Heart left ventricle (tissue), 16 donors: ENCODE measurements at regions of chr14 and their contacts with region 1.

Region 1: GRCh38 chr14:70821584-70822529 is 12.5 kb upstream of the MAP3K9 start:
- DNase-seq: peak; percentile 53 to 80 (median 64)
- ATAC-seq: peak in 3 of 4 donors; percentile 59 to 71 (median 70)
- H3K4me3 ChIP-seq: peak overlapping the region; percentile 52 to 89 (median 73)
- H3K27ac ChIP-seq: peak overlapping the region in 9 of 12 donors; percentile 17 to 77 (median 58)
- H3K4me1 ChIP-seq: peaks cover 0 to 22% (median 12%) of the 10 kb centered on the region in 12 donors
- H3K27me3 ChIP-seq: peaks cover 0 to 24% (median 0%) of the 10 kb centered on the region in 9 donors
- CTCF ChIP-seq: no peak
- POLR2A ChIP-seq: peak in 1 of 2 donors; percentile 26

Region 2: GRCh38 chr14:70622111-70622712 is 199.6 kb before region 1 on chr14:
- intact Hi-C with region 1: loop called (anchors 2 to 10 kb)
- DNase-seq: no peak
- ATAC-seq: peak in 3 of 4 donors; percentile 47 to 77 (median 56)
- H3K4me3 ChIP-seq: no peak overlapping the region
- H3K27ac ChIP-seq: no peak overlapping the region
- H3K4me1 ChIP-seq: peaks cover 0 to 7% (median 0%) of the 10 kb centered on the region in 12 donors
- H3K27me3 ChIP-seq: no peaks in the 10 kb centered on the region
- CTCF ChIP-seq: peak; percentile 45 to 70 (median 62)
- POLR2A ChIP-seq: no peak

Region 3: DNA sequence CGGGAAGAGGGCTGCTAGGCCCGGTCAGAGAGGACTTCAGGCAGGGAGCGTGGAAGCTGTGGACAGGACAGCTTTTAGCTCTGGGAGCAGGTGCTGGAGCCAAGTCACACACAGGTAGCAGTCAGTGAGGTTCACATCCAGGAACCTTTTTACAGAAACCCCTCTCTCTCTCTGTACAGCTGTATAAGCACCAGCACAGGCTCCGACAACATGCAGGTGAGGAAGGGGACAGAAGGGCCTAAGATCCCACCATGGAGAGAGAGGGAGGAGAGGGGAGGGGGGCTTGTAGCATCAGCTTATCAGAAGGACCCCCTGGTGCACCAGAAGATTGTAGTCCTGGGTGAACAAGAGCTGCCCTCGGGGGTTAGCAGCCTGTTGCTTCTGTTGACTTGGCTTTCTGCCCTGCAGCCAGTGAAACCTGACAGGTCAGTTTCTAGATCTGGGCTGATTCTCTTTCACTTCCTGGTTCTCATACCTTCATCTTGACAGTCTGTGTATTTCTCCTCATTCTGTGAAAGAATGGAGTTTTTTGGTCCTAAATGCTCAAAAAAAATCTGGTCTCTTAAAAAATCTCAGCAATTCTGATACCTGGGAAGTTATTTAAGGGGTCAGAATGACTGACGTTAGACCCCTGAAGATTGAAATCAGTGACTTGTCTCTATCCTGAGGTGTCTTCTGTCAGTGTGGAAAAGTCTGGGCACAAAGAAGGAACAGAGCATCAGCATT is 156.5 kb before region 1 on chr14:
- intact Hi-C with region 1: no loop called
- DNase-seq: no peak
- ATAC-seq: no peak
- H3K4me3 ChIP-seq: no peak overlapping the region
- H3K27ac ChIP-seq: no peak overlapping the region
- H3K4me1 ChIP-seq: peaks cover 0 to 24% (median 10%) of the 10 kb centered on the region in 12 donors
- H3K27me3 ChIP-seq: no peaks in the 10 kb centered on the region
- CTCF ChIP-seq: no peak
- POLR2A ChIP-seq: no peak

Region 4: GRCh38 chr14:70901269-70901668 is 79.4 kb after region 1 on chr14:
- intact Hi-C with region 1: loop called in 9 of 10 experiments (anchors 2 to 5 kb)
- DNase-seq: no peak
- ATAC-seq: no peak
- H3K4me3 ChIP-seq: no peak overlapping the region
- H3K27ac ChIP-seq: no peak overlapping the region
- H3K4me1 ChIP-seq: peaks cover 0 to 48% (median 22%) of the 10 kb centered on the region in 12 donors
- H3K27me3 ChIP-seq: no peaks in the 10 kb centered on the region
- CTCF ChIP-seq: no peak
- POLR2A ChIP-seq: no peak

Region 5: GRCh38 chr14:70907176-70907995 is 85.5 kb after region 1 on chr14 and contains the start of gene PCNX1:
- intact Hi-C with region 1: loop called in 9 of 10 experiments (anchors 2 to 5 kb)
- DNase-seq: peak; percentile 90 to 94 (median 91)
- ATAC-seq: peak; percentile 82 to 91 (median 86)
- H3K4me3 ChIP-seq: peak within 1 kb of the TSS; percentile 78 to 99 (median 94)
- H3K27ac ChIP-seq: peak within 1 kb of the TSS; percentile 80 to 98 (median 94)
- H3K4me1 ChIP-seq: peaks cover 0 to 66% (median 50%) of the 10 kb centered on the region in 12 donors
- H3K27me3 ChIP-seq: no peaks in the 10 kb centered on the region
- CTCF ChIP-seq: peak; percentile 73 to 97 (median 89)
- POLR2A ChIP-seq: peak in 1 of 2 donors; percentile 37
- total RNA-seq, gene PCNX1: 36.3 to 64.7 (median 53.4) TPM

Region 6: DNA sequence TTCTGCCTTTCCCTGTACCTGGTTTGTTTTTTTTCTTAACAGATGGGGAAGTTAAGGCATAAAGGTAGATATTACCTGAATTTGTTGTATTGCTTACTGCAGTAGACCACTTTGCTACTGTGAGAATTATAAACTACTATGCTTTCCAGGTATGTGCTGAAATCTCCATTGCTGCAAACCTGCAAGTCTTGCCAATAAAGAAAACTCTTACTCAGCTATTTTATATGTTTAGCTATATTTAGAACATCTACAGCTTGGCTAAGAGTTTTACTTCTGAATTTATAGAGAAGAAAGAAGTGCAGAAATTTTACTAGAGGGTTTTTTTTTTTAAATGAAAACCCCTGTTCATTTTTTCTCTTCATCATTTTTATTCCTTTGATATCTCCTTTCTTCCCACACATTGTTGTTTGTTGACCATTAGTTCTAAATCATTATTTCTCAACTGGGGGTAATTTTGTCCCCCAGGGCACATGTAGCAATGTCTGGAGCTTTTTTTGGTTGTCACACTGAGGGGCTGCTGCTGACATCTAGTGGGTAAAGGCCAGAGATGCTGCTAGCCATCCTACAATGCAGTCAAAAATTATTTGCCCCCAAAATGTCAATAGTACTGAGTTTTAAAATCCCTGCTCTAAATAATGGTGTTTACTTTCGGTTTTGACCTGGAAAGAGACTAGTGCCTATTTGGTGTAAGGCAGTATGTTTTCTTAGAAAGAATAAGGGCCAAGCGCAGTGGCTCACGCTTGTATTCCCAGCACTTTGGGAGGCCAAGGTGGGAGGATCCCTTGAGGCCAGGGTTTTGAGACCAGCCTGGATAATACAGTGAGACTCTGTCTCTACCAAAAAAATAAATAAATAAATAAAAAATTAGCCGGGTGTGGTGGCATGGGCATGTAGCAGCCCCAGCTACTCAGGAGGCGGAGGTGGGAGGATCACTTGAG is 134.0 kb after region 1 on chr14:
- intact Hi-C with region 1: loop called in 4 of 10 experiments (anchors 5 kb)
- DNase-seq: no peak
- ATAC-seq: peak in 3 of 4 donors; percentile 49 to 55 (median 54)
- H3K4me3 ChIP-seq: no peak overlapping the region
- H3K27ac ChIP-seq: no peak overlapping the region
- H3K4me1 ChIP-seq: peaks cover 0 to 47% (median 24%) of the 10 kb centered on the region in 12 donors
- H3K27me3 ChIP-seq: no peaks in the 10 kb centered on the region
- CTCF ChIP-seq: peak in 11 of 12 donors; percentile 34 to 67 (median 54)
- POLR2A ChIP-seq: no peak

Region 7: DNA sequence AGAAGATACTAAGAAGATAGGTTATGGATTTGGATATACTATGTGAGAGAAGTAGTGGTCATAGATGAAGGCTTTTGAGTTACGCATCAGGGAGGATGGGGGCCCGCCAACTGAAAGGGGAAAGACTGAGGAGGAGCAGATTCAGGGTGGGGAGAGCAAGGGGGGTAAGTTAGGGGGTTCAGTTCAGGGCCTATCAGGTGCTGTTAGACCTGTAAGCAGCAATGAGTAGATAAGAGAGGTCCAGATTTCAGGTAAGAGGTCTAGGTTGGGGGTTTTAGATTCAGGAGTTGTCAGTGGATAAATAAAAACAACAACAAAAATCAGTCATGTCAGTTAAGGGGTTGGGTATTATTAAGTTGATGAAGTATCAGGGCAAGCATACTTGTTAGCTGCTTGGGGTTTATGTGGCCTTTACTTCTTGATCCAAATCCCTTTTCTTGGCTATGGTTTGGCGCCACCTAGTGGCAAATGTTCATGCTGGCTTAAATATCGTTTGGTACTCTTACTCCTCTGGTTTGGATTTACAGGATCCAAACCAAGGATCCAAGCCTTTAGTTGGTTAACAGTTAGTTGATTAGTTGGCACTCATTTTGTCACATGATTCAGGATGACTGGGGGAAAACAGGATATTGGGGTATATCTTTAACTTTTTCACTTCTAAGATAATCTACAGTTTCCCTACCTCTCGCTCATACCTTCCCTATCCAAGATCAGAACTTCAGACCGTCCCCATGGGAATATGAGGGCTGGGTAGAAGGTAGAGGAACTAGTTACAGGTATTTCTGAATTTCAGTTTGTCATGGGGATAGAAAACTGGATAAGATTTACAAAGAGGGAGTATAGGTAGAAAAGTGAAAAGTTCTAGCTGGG is 150.5 kb after region 1 on chr14:
- intact Hi-C with region 1: loop called (anchors 1 to 5 kb)
- DNase-seq: peak; percentile 64 to 84 (median 81)
- ATAC-seq: peak; percentile 60 to 89 (median 87)
- H3K4me3 ChIP-seq: no peak overlapping the region
- H3K27ac ChIP-seq: no peak overlapping the region
- H3K4me1 ChIP-seq: peaks cover 0 to 15% (median 4%) of the 10 kb centered on the region in 12 donors
- H3K27me3 ChIP-seq: no peaks in the 10 kb centered on the region
- CTCF ChIP-seq: peak; percentile 88 to 98 (median 94)
- POLR2A ChIP-seq: no peak